WTC11 (cell line): ENCODE measurements at regions of chr3 and their contacts with region 1.

Region 1: DNA sequence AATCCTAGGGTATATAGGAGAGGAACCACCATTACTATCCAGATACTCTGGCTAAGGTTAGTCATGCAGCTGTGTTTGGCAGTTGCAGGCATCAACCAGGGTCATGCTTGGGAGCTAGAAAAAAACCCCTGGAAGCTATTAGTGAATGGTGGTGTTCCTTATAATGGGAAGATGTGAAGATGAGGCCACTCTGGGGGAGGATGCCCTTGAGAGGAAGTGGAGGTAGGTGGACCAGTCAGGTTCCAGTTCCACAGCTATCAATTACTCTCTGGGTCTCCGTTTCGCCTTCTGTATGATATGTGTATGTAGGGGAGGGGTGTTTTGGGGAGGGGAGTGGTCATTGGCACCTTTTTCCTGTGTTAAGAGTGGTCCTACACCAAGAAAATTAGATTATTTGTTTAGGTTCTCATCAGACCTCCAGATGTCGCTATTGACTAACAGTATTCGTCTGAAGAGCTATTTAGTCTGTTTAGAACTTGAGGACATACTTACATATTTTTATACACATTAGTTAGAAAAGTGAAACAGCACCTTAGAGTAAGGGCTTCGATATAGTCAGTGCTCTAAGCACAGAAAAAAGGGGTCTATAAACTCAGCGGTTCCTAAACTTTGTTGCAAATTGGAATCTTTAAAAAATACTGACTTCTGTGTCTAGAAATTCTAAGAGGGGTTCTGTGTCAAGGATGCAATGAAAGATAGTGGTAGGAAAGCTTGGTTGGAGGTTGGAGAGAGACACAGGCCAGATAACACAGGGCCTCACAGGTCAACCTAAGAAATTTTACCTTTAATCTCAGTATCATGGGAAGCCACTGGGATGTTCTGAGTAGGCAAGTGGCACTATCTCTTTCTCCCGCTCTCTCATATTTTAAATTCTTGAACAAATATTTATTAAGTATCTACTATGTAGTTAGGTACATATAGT is 9.1 kb upstream of the HPS3 start:
- DNase-seq: no peak
- ATAC-seq: peak; percentile 92
- H3K4me3 Mint-ChIP-seq: no peak overlapping the region
- H3K27ac Mint-ChIP-seq: no peak overlapping the region
- H3K4me1 Mint-ChIP-seq: peaks cover 4% of the 10 kb centered on the region; the same call in 1 of the 2 replicates
- H3K27me3 Mint-ChIP-seq: no peaks in the 10 kb centered on the region
- CTCF ChIP-seq: peak; percentile 49; the same call in 1 of the 2 replicates

Region 2: GRCh38 chr3:149016669-149017541 is 103.4 kb before region 1 on chr3:
- CTCF ChIA-PET with region 1: no interaction called
- POLR2A ChIA-PET with region 1: no interaction called
- DNase-seq: no peak
- ATAC-seq: no peak
- H3K4me3 Mint-ChIP-seq: no peak overlapping the region
- H3K27ac Mint-ChIP-seq: peak overlapping the region; percentile 25; the same call in 1 of the 2 replicates
- H3K4me1 Mint-ChIP-seq: peaks cover 53% of the 10 kb centered on the region
- H3K27me3 Mint-ChIP-seq: no peaks in the 10 kb centered on the region
- CTCF ChIP-seq: no peak

Region 3: DNA sequence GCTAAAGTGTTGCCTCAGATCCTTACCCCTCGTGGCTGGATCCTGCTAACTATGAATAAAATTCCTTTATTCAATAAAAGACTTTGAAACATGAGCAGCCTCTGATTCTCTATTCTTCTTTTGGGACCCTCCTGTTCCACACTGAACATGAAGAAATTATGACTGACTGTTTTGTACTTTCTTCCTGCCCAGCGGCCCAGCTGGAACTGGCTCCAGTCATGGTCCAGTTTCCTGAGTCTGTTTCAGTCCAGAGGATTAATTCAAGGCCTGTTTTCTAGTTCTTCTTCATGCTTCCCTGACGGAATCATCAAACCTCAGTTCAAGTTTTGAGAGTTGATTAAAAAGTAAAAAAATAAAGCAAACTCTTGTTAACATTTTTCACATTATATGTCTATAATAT is 153.9 kb after region 1 on chr3:
- CTCF ChIA-PET with region 1: interaction called, 10 read pairs
- POLR2A ChIA-PET with region 1: no interaction called
- DNase-seq: no peak
- ATAC-seq: no peak
- H3K4me3 Mint-ChIP-seq: no peak overlapping the region
- H3K27ac Mint-ChIP-seq: no peak overlapping the region
- H3K4me1 Mint-ChIP-seq: peaks cover 46% of the 10 kb centered on the region
- H3K27me3 Mint-ChIP-seq: no peaks in the 10 kb centered on the region
- CTCF ChIP-seq: no peak

Region 4: DNA sequence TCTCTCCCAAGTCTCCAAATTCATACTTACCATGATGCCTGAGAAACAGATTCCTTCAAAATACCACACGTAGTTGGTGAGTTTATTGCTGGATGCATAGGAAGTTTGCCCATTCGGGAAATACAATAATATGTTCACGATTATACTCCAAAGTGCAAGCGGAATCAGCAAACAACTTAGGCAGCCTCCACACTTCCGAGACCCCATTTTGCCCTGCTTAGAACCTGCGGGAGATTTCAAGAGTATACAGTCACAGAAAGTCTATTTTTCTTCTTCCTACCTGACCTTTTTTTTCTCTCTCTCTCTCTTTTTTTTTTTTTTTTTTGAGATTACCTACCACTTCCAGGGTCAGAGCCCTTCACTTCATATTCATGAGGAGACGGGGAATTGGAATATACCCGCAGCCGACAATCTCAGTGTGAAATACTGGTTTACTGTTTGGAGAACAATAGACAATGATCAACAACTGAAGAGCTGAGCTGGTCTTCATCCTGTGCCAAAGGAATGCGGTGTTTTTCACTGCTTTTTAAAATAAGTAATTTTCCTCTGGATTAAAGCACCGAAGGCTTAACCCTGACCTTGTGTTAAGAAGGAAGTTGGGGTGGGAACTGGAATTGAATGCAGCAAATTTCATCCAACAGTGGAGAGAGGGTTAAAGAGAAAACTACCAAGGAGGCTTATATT is 213.0 kb after region 1 on chr3 and contains the start of gene TM4SF18:
- CTCF ChIA-PET with region 1: interaction called, 17 read pairs
- POLR2A ChIA-PET with region 1: no interaction called
- DNase-seq: no peak
- ATAC-seq: peak; percentile 74
- H3K4me3 Mint-ChIP-seq: peak within 1 kb of the TSS; percentile 28
- H3K27ac Mint-ChIP-seq: peak within 1 kb of the TSS; percentile 85
- H3K4me1 Mint-ChIP-seq: peaks cover 17% of the 10 kb centered on the region; the same call in 1 of the 2 replicates
- H3K27me3 Mint-ChIP-seq: no peaks in the 10 kb centered on the region
- CTCF ChIP-seq: no peak
- total RNA-seq, gene TM4SF18: 1.6 to 2.4 TPM (median 2.2 TPM) in 3 replicates

Region 5: GRCh38 chr3:149342413-149343380 is 222.4 kb after region 1 on chr3:
- CTCF ChIA-PET with region 1: interaction called, 18 read pairs
- POLR2A ChIA-PET with region 1: no interaction called
- DNase-seq: no peak
- ATAC-seq: no peak
- H3K4me3 Mint-ChIP-seq: no peak overlapping the region
- H3K27ac Mint-ChIP-seq: no peak overlapping the region
- H3K4me1 Mint-ChIP-seq: peaks cover 38% of the 10 kb centered on the region
- H3K27me3 Mint-ChIP-seq: no peaks in the 10 kb centered on the region
- CTCF ChIP-seq: no peak